ENCODE measurements at regions of chr1 and their contacts with region 1.

Region 1: DNA sequence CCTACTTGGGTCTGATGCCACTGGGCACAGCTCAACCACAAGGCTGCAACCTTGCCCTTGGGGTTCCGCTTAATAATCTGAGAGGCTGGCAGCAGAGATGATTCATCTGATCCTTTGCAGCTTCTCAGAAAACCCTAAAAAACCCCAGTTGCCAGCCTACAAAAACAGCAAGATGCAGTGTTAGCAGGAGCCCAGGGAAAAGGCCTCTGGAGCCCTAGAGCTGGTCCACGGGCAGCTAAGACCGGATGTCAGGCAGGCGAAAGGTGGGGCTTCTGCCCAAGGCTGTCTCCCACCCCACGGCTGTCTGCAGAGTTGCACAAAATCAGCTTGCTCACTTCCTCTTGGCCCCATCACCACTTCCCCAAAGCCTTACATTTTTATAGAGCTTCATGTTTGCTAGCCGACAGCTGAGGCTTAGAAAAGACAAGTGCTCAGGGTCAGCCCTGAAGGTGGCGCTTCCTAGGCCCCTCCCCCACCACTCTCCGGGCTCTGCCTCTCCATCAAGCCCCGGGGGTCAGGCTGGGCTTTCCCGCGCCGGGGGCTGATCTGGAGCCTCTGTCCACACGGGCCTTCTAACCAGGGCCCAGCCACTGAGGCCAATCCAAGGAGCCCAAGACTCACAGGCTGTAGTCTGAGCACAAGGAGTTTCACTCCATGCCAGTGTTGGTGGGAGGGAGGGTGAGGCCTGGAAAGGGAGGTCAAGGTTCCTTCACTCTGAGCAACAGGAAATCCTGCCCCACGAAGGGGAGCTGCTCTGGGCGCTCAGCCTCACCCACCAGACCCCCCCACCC is 4.2 kb upstream of the ADORA3 start:
- DNase-seq: peak; percentile 38
- H3K4me3 Mint-ChIP-seq: peak overlapping the region; percentile 41
- H3K27ac Mint-ChIP-seq: no peak overlapping the region
- H3K4me1 Mint-ChIP-seq: peaks cover 8% of the 10 kb centered on the region
- H3K27me3 Mint-ChIP-seq: no peaks in the 10 kb centered on the region
- CTCF ChIP-seq: no peak

Region 2: DNA sequence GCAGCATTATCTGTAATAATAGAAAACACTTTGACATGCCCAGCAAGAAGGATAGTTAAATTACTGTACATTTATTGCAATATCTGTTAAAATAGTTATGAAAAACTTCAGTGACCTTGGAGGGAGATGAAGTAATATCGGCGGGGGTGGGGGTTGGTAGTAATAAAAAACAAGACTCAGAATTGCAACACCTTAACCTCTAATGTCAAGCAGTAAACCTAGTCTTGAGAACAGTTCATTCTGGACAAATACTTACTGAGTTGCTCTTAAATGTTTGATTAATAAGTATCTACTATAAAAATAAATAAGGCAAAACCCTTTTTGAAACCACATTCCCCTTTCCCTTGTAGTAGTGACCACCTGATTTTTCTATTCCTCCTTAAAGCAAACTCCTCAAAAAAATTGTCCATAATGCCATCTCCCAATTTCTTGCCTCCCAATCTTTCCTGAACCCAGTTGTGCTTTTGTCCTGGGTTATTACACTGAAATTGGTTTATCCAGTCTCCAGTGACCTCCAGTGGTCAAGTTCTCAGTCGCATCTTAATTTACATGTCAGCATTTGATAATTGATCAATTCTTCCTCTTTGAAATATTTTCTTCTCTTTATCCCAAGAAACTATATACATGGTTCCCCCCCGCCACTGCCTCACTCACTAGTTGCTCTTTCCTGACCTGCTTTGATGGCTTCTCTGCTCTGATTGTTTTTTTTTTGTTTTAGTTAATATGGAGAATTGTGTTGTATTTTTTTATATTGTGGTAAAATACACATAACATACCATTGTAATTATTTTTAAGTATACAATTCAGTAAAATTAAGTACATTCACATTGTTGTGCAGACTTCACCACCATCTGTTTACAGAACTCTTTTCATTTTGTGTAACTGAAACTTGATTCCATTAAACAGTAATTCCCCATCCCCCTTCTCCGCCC is 148.7 kb after region 1 on chr1:
- CTCF ChIA-PET with region 1: interaction called, 6 read pairs
- intact Hi-C with region 1: loop called (anchors 1 kb)
- DNase-seq: peak; percentile 9
- H3K4me3 Mint-ChIP-seq: no peak overlapping the region
- H3K27ac Mint-ChIP-seq: peak overlapping the region; percentile 72
- H3K4me1 Mint-ChIP-seq: peaks cover 9% of the 10 kb centered on the region
- H3K27me3 Mint-ChIP-seq: no peaks in the 10 kb centered on the region
- CTCF ChIP-seq: peak; percentile 35

Measured in Calu3 (cell line).